Sigmoid colon (tissue), 7 donors: ENCODE measurements at regions of chr18 and their contacts with region 1.

Region 1: GRCh38 chr18:46173393-46174341 is 69.5 kb downstream of the HAUS1 start:
- DNase-seq: peak; percentile 94
- H3K4me3 ChIP-seq: peak overlapping the region; percentile 79 to 98 (median 88)
- H3K27ac ChIP-seq: peak overlapping the region; percentile 87 to 92 (median 91)
- H3K4me1 ChIP-seq: peaks cover 0 to 40% (median 24%) of the 10 kb centered on the region in 4 donors
- H3K27me3 ChIP-seq: no peaks in the 10 kb centered on the region
- CTCF ChIP-seq: peak; percentile 78 to 88 (median 82)
- EP300 ChIP-seq: no peak
- POLR2A ChIP-seq: peak in 1 of 2 donors; percentile 41

Region 2: GRCh38 chr18:44835703-44836102 is 1338.0 kb before region 1 on chr18:
- intact Hi-C with region 1: no loop called
- DNase-seq: peak; percentile 81
- H3K4me3 ChIP-seq: no peak overlapping the region
- H3K27ac ChIP-seq: peak overlapping the region; percentile 18 to 73 (median 52)
- H3K4me1 ChIP-seq: peaks cover 4 to 94% (median 83%) of the 10 kb centered on the region in 4 donors
- H3K27me3 ChIP-seq: no peaks in the 10 kb centered on the region
- CTCF ChIP-seq: peak in 1 of 4 experiments; percentile 10
- EP300 ChIP-seq: no peak
- POLR2A ChIP-seq: no peak

Region 3: GRCh38 chr18:45967007-45967706 is 206.5 kb before region 1 on chr18 and contains the start of gene EPG5:
- intact Hi-C with region 1: loop called (anchors 5 kb)
- DNase-seq: peak; percentile 97
- H3K4me3 ChIP-seq: peak within 1 kb of the TSS; percentile 72 to 86 (median 82)
- H3K27ac ChIP-seq: peak within 1 kb of the TSS; percentile 71 to 75 (median 74)
- H3K4me1 ChIP-seq: peaks cover 0 to 21% (median 15%) of the 10 kb centered on the region in 4 donors
- H3K27me3 ChIP-seq: no peaks in the 10 kb centered on the region
- CTCF ChIP-seq: no peak
- EP300 ChIP-seq: no peak
- POLR2A ChIP-seq: peak; percentile 22 to 39
- total RNA-seq, gene EPG5: 17.1 to 29.1 (median 26.9) TPM

Region 4: DNA sequence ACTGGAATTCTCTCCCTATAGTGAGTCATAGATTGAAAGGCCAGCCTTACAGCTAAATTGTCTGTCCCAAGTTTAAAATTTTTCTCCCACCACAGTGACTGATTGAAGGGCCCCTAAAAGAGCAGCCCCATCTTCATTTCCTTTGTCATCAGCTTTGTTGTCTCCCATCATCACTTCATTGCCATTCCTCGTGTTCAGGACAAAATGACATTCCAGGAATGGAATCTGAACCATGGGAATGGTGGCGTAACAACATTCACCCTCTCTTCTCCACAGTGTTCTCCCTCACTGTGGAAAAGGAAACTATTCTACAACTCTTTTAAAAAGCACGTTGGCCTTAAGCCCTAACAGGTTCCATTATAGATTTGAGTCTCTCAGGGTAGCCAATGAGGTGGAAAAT is 153.7 kb before region 1 on chr18:
- intact Hi-C with region 1: no loop called
- DNase-seq: no peak
- H3K4me3 ChIP-seq: no peak overlapping the region
- H3K27ac ChIP-seq: no peak overlapping the region
- H3K4me1 ChIP-seq: no peaks in the 10 kb centered on the region
- H3K27me3 ChIP-seq: no peaks in the 10 kb centered on the region
- CTCF ChIP-seq: no peak
- EP300 ChIP-seq: no peak
- POLR2A ChIP-seq: no peak

Region 5: DNA sequence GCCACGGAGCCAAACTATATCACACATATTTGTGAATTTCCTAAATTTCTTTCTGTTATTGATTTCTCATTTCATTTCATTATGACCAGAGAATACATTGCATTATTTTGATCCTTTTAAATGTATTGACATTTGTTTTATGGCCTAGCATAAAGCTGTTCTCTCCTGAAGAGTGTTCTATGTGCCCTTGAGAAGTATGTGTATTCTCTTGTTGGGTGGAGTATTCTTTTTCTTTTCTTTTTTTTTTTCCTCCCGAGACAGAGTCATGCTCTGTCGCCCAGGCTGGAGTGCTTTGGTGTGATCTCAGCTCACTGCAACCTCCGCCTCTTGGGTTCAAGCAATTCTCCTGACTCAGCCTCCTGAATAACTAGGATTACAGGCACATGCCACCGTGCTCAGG is 64.3 kb before region 1 on chr18:
- intact Hi-C with region 1: loop called (anchors 5 kb)
- DNase-seq: no peak
- H3K4me3 ChIP-seq: no peak overlapping the region
- H3K27ac ChIP-seq: no peak overlapping the region
- H3K4me1 ChIP-seq: peaks cover 0 to 12% (median 10%) of the 10 kb centered on the region in 4 donors
- H3K27me3 ChIP-seq: no peaks in the 10 kb centered on the region
- CTCF ChIP-seq: no peak
- EP300 ChIP-seq: no peak
- POLR2A ChIP-seq: no peak

Region 6: DNA sequence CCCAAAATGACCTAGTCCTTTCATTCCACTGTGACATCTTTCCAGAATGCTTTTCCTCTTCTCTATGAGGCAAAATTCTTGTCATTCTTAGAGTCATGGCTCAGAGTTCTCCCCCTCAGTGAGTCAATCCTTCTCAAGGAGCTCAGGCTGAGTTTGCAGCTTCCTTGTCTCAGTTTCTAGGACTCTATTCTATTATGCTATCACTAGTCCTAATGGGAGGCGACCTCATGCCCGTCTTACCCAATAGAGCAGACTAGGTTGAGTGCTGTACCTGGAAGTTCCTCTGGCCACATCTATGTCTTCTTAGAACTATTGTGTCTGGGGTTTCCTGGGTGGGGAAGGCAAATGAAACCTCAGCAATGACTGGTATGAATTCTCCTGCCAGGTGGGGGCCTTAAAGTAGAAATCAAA is 18.0 kb before region 1 on chr18:
- intact Hi-C with region 1: no loop called
- DNase-seq: no peak
- H3K4me3 ChIP-seq: no peak overlapping the region
- H3K27ac ChIP-seq: no peak overlapping the region
- H3K4me1 ChIP-seq: no peaks in the 10 kb centered on the region
- H3K27me3 ChIP-seq: no peaks in the 10 kb centered on the region
- CTCF ChIP-seq: no peak
- EP300 ChIP-seq: no peak
- POLR2A ChIP-seq: no peak

Region 7: DNA sequence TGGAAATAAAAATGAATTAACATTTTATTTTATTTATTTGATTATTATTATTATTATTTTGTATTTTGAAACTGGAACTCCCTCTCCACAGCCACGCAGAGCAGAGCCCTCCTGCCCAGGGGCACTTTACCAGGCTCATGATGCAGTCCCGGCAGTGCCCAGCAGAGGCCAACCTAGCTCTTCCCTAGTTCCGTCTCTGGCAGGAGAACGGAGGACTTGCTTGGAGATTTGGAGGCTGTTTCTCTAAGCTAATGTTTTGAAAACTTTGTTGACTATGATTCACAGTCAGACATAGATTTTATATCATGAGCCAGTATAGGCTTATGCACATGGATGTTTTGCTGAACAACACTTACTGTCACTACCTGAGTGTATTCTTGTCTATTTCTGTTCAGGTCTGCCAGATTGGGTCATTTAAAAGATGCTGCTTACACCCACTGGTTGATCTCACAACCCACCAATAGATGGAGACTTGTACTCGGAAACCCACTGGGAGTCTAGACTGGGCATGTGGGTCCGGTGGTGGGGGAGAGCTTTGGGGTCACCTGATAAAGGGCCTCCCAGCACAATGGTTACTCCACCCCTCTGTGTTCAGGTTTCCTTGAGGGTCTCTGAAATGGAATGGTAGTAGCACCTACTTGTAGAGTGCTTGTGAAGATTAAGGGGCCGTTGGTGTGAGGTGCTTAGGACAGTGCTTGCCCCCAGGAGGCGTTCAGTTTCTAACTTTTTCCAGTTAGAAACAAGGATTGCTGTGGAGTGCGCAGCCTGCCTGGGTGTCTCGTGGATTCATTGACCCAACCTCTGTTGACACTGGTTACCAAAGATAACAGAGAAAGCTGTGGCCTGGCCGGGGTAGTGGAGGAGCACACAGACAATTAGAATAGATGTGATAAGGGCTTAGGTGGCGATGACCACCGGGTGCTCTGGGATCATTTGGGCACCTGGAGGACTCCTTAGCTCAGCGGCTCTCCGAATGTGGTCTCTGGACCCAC is 107.8 kb after region 1 on chr18:
- intact Hi-C with region 1: loop called (anchors 5 kb)
- DNase-seq: no peak
- H3K4me3 ChIP-seq: no peak overlapping the region
- H3K27ac ChIP-seq: no peak overlapping the region
- H3K4me1 ChIP-seq: peaks cover 0 to 5% (median 2%) of the 10 kb centered on the region in 4 donors
- H3K27me3 ChIP-seq: no peaks in the 10 kb centered on the region
- CTCF ChIP-seq: peak; percentile 62 to 94 (median 86)
- EP300 ChIP-seq: no peak
- POLR2A ChIP-seq: no peak

Region 8: GRCh38 chr18:46334868-46335281 is 161.2 kb after region 1 on chr18:
- intact Hi-C with region 1: loop called (anchors 5 kb)
- DNase-seq: peak; percentile 64
- H3K4me3 ChIP-seq: peak overlapping the region; percentile 38 to 72 (median 63)
- H3K27ac ChIP-seq: peak overlapping the region in 3 of 4 donors; percentile 55 to 71 (median 66)
- H3K4me1 ChIP-seq: peaks cover 0 to 45% (median 32%) of the 10 kb centered on the region in 4 donors
- H3K27me3 ChIP-seq: peaks cover 0 to 5% (median 5%) of the 10 kb centered on the region in 3 donors
- CTCF ChIP-seq: no peak
- EP300 ChIP-seq: no peak
- POLR2A ChIP-seq: no peak

Region 9: GRCh38 chr18:46481048-46481846 is 307.6 kb after region 1 on chr18:
- intact Hi-C with region 1: loop called (anchors 5 kb)
- DNase-seq: no peak
- H3K4me3 ChIP-seq: no peak overlapping the region
- H3K27ac ChIP-seq: no peak overlapping the region
- H3K4me1 ChIP-seq: no peaks in the 10 kb centered on the region
- H3K27me3 ChIP-seq: no peaks in the 10 kb centered on the region
- CTCF ChIP-seq: peak in 3 of 4 experiments; percentile 61 to 70 (median 65)
- EP300 ChIP-seq: no peak
- POLR2A ChIP-seq: no peak

Region 10: DNA sequence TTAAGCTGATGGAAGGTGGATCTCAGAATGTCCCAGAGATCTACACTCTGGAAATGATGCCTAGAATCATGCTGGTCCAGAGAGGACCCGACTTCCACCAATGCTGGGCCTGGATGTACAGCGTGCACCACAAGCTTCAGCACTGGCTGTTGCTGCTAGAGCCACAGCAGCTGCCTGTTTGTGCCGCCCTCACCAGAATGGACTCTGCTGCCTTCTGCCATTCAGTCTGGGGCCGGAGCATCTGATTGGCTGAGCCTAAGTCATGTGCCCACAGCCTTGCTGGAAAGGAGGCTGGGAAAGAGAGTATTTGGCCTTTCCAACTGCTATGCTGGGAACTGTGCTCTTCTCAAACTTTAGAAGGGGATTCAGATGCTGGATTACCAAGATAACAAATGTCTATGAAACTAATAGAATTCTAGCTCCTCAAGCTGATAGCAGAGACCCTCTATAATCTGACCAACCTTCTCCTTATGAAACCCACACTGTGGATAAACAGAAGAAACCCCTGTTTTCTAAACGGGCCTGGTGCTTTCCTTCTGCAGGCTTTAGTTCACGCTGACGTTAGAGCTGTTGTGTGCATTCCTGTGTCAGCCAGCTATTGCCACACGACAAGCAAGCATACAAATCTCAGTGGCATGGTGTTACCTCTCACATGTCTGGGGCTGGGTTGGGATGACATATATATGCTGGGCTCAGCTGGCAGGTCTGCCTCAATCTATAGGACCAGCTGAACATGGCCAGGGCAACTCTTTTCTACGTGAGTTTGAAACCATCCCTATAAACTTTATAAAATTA is 487.5 kb after region 1 on chr18:
- intact Hi-C with region 1: loop called (anchors 1 kb)
- DNase-seq: no peak
- H3K4me3 ChIP-seq: no peak overlapping the region
- H3K27ac ChIP-seq: no peak overlapping the region
- H3K4me1 ChIP-seq: no peaks in the 10 kb centered on the region
- H3K27me3 ChIP-seq: no peaks in the 10 kb centered on the region
- CTCF ChIP-seq: no peak
- EP300 ChIP-seq: no peak
- POLR2A ChIP-seq: no peak